ENCODE measurements at regions of chr20 and their contacts with region 1.

Region 1: GRCh38 chr20:22586645-22587310 is 2.4 kb upstream of the FOXA2 start:
- DNase-seq: no peak
- H3K4me3 ChIP-seq: no peak overlapping the region
- H3K27ac ChIP-seq: no peak overlapping the region
- H3K4me1 ChIP-seq: no peaks in the 10 kb centered on the region
- H3K27me3 ChIP-seq: peaks cover 68 to 90% of the 10 kb centered on the region in 2 experiments
- CTCF ChIP-seq: peak; percentile 51 to 80
- POLR2A ChIP-seq: no peak

Region 2: GRCh38 chr20:20887593-20888265 is 1699.0 kb before region 1 on chr20:
- CTCF ChIA-PET with region 1: no interaction called
- POLR2A ChIA-PET with region 1: no interaction called
- dilution Hi-C with region 1: no loop called
- intact Hi-C with region 1: no loop called
- DNase-seq: no peak
- H3K4me3 ChIP-seq: no peak overlapping the region
- H3K27ac ChIP-seq: no peak overlapping the region
- H3K4me1 ChIP-seq: no peaks in the 10 kb centered on the region
- H3K27me3 ChIP-seq: no peaks in the 10 kb centered on the region
- CTCF ChIP-seq: no peak
- POLR2A ChIP-seq: no peak

Region 3: DNA sequence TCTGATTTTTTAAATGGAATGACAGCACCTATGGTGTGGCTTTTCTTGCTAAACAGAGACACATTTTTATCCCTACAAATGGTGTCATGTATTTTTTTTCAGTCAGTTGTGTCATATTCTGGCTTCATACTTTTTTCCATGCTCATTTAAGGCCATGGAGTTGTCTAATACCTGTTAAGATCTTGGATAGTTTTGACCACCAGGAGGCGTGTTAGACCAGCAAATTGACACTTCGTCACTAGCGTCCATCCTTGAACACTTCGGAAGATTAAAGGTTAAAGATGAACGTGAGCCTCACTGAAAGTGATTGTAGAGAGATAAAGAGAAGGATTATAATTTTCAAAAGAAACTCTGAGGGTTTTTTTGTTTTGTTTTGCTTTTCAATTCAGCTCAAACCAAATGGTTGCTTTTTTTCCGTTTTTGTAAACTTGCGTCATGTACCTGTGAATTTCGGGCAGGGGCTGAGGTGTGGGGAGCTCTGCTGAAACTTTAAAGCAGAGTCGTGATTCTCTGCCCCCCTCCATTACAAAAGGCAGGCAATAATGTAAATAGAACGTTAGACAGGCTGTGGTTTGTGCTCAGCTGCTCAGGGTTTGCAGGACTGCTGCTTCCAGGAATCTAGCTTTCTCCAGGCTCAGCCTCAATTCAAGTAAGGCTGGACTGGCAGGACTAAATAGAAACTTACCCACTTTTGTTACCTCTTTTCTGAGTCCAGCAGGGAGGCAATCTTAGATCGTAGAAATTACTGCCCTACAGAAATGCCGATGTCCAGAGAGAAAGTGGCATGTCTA is 247.5 kb before region 1 on chr20:
- CTCF ChIA-PET with region 1: interaction called, 75 read pairs
- POLR2A ChIA-PET with region 1: no interaction called
- dilution Hi-C with region 1: no loop called
- intact Hi-C with region 1: loop called (anchors 1 kb)
- DNase-seq: peak; percentile 64
- H3K4me3 ChIP-seq: no peak overlapping the region
- H3K27ac ChIP-seq: no peak overlapping the region
- H3K4me1 ChIP-seq: no peaks in the 10 kb centered on the region
- H3K27me3 ChIP-seq: peaks cover 5 to 10% of the 10 kb centered on the region in 2 experiments
- CTCF ChIP-seq: peak; percentile 60 to 61
- POLR2A ChIP-seq: no peak

Region 4: DNA sequence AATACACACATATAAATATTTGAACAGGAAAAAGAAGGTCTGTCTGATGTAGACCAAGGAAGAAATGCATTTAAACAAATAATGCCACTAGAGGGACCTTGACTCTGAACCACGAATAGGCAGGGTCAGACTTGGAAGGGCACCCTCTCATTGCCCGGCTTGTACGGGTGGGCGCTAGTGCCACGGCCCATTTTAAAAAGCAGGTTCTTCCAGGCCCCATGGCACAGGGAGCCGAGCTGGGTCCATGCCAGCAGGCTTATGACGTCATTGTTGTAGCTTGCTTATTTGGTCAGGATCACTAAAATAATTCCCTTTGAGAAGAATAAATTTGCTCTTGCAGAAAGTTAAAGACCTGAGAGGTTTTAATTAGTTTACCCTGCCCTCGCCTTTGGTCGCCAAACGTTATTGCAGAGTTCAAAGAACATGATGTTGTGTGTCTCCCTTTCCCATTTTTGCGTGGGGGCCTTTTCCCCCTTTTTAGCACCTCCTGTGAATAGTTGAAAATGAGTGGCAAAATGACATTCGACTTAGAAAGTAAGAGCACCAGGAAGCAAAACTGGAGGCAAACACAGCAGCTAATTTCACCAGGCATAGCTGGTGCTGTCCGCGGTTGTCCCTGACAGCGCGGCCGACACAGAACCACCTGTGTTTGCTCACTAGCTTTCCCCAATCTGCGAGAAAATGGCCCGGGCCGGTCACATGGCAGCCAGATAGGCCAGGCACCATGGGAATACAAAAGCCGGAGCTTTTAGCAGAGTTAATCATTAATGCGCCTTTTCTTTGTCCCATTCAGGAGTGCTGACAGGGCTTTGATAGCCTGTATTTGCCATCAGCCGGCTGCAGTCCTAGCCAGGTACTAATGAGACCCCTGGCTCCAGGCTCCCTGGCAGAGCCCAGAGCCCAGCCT is 96.2 kb before region 1 on chr20:
- CTCF ChIA-PET with region 1: interaction called, 4 read pairs
- POLR2A ChIA-PET with region 1: no interaction called
- dilution Hi-C with region 1: no loop called
- intact Hi-C with region 1: loop called (anchors 1 kb)
- DNase-seq: no peak
- H3K4me3 ChIP-seq: no peak overlapping the region
- H3K27ac ChIP-seq: no peak overlapping the region
- H3K4me1 ChIP-seq: no peaks in the 10 kb centered on the region
- H3K27me3 ChIP-seq: no peaks in the 10 kb centered on the region
- CTCF ChIP-seq: no peak
- POLR2A ChIP-seq: no peak

Region 5: GRCh38 chr20:22575087-22575721 is 11.6 kb before region 1 on chr20:
- CTCF ChIA-PET with region 1: interaction called, 20 read pairs
- POLR2A ChIA-PET with region 1: no interaction called
- dilution Hi-C with region 1: no loop called
- intact Hi-C with region 1: no loop called
- DNase-seq: no peak
- H3K4me3 ChIP-seq: no peak overlapping the region
- H3K27ac ChIP-seq: no peak overlapping the region
- H3K4me1 ChIP-seq: no peaks in the 10 kb centered on the region
- H3K27me3 ChIP-seq: peaks cover 90 to 96% of the 10 kb centered on the region in 2 experiments
- CTCF ChIP-seq: no peak
- POLR2A ChIP-seq: no peak

Region 6: GRCh38 chr20:22663528-22664025 is 76.8 kb after region 1 on chr20:
- CTCF ChIA-PET with region 1: no interaction called
- POLR2A ChIA-PET with region 1: no interaction called
- dilution Hi-C with region 1: no loop called
- intact Hi-C with region 1: no loop called
- DNase-seq: no peak
- H3K4me3 ChIP-seq: no peak overlapping the region
- H3K27ac ChIP-seq: no peak overlapping the region
- H3K4me1 ChIP-seq: no peaks in the 10 kb centered on the region
- H3K27me3 ChIP-seq: no peaks in the 10 kb centered on the region
- CTCF ChIP-seq: no peak
- POLR2A ChIP-seq: no peak

Region 7: DNA sequence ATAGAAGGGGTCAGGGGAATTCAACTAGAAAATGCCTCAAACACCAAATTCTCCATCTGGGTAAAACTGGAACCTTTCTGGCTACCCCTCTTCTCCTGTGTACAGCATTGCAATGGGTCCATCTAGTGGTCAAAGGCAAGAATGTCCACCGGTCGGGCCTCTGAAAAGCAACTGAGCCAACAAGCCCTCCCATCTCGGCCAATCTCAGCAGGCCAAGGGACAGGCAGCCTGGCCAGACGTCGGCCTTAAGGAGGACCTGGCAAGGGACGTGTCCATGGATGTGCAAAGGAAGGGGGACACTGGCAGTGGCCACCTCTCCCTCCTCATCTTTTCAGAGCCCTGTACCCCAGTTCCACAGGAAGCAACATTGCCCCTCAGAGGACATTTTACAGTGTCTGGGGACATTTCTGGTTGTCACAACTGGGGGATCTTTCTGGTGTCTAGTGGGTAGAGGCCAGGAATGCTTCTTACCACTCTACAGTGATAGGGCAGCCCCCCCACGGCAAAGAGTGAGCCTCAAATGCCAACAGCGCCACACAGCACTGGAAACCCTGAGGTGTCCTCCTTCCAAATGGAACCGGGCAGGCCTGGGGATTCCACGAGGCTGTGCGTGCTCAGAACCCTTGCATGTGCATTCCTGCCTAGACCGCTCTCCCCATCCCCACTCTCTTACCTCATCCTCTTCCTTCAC is 97.4 kb after region 1 on chr20:
- CTCF ChIA-PET with region 1: interaction called, 5 read pairs
- POLR2A ChIA-PET with region 1: no interaction called
- dilution Hi-C with region 1: no loop called
- intact Hi-C with region 1: loop called (anchors 1 kb)
- DNase-seq: peak; percentile 76
- H3K4me3 ChIP-seq: no peak overlapping the region
- H3K27ac ChIP-seq: no peak overlapping the region
- H3K4me1 ChIP-seq: peaks cover 20% of the 10 kb centered on the region
- H3K27me3 ChIP-seq: peaks cover 10% of the 10 kb centered on the region in 2 experiments
- CTCF ChIP-seq: peak; percentile 78 to 89
- POLR2A ChIP-seq: no peak